ENCODE measurements at regions of chr16 and their contacts with region 1.

Region 1: GRCh38 chr16:69310653-69311532 is at the start of gene VPS4A:
- DNase-seq: peak; percentile 92
- ATAC-seq: peak; percentile 91
- H3K4me3 ChIP-seq: peak within 1 kb of the TSS; percentile 74 to 96 (median 81)
- H3K27ac ChIP-seq: peak within 1 kb of the TSS; percentile 75
- H3K4me1 ChIP-seq: peaks cover 34% of the 10 kb centered on the region
- H3K27me3 ChIP-seq: no peaks in the 10 kb centered on the region
- CTCF ChIP-seq: peak; percentile 92
- EP300 ChIP-seq: peak; percentile 14 to 54; a peak in 2 of 4 replicates
- POLR2A ChIP-seq: peak; percentile 81 to 82
- RAD21 ChIP-seq: peak; percentile 91
- total RNA-seq, gene VPS4A: 21.0 and 27.9 TPM in 2 replicates

Region 2: GRCh38 chr16:69298261-69298660 is 12.6 kb before region 1 on chr16:
- CTCF ChIA-PET with region 1: no interaction called
- POLR2A ChIA-PET with region 1: no interaction called
- in situ Hi-C with region 1: no loop called
- intact Hi-C with region 1: no loop called
- DNase-seq: no peak
- ATAC-seq: no peak
- H3K4me3 ChIP-seq: no peak overlapping the region
- H3K27ac ChIP-seq: peak overlapping the region; percentile 35
- H3K4me1 ChIP-seq: peaks cover 21% of the 10 kb centered on the region
- H3K27me3 ChIP-seq: no peaks in the 10 kb centered on the region
- CTCF ChIP-seq: no peak
- EP300 ChIP-seq: no peak
- POLR2A ChIP-seq: no peak
- RAD21 ChIP-seq: no peak

Region 3: GRCh38 chr16:69330286-69331109 is 19.6 kb after region 1 on chr16 and contains the start of gene PDF:
- CTCF ChIA-PET with region 1: no interaction called
- POLR2A ChIA-PET with region 1: interaction called, 16 read pairs
- in situ Hi-C with region 1: no loop called
- intact Hi-C with region 1: loop called (anchors 2 kb)
- DNase-seq: peak; percentile 93
- ATAC-seq: peak; percentile 90
- H3K4me3 ChIP-seq: peak within 1 kb of the TSS; percentile 70 to 88 (median 84)
- H3K27ac ChIP-seq: peak within 1 kb of the TSS; percentile 87
- H3K4me1 ChIP-seq: peaks cover 49% of the 10 kb centered on the region
- H3K27me3 ChIP-seq: no peaks in the 10 kb centered on the region
- CTCF ChIP-seq: peak; percentile 65
- EP300 ChIP-seq: 0 out of 4 replicates have a peak, but pooled peaks of 1 of the 2 experiments have one; percentile 35
- POLR2A ChIP-seq: peak; percentile 79 to 96
- RAD21 ChIP-seq: no peak; the same call in none of the 2 replicates
- total RNA-seq, gene PDF: 26.8 and 48.8 TPM in 2 replicates

Region 4: GRCh38 chr16:69386596-69386995 is 75.7 kb after region 1 on chr16:
- CTCF ChIA-PET with region 1: no interaction called
- POLR2A ChIA-PET with region 1: no interaction called
- in situ Hi-C with region 1: no loop called
- intact Hi-C with region 1: no loop called
- DNase-seq: no peak
- ATAC-seq: no peak
- H3K4me3 ChIP-seq: no peak overlapping the region
- H3K27ac ChIP-seq: no peak overlapping the region
- H3K4me1 ChIP-seq: peaks cover 37% of the 10 kb centered on the region
- H3K27me3 ChIP-seq: no peaks in the 10 kb centered on the region; a peak in 2 of 5 replicates
- CTCF ChIP-seq: no peak
- EP300 ChIP-seq: no peak
- POLR2A ChIP-seq: no peak
- RAD21 ChIP-seq: no peak

Measured in HepG2 (cell line).